ENCODE measurements at regions of chr1 and their contacts with region 1.

Region 1: GRCh38 chr1:115469703-115470476 is 131.8 kb upstream of the NGF start:
- DNase-seq: peak in 4 of 6 donors; percentile 59 to 81 (median 71)
- ATAC-seq: peak; percentile 55 to 98 (median 91)
- H3K4me3 ChIP-seq: no peak overlapping the region
- H3K27ac ChIP-seq: no peak overlapping the region
- H3K4me1 ChIP-seq: no peaks in the 10 kb centered on the region
- H3K27me3 ChIP-seq: no peaks in the 10 kb centered on the region
- CTCF ChIP-seq: peak; percentile 63 to 90 (median 86)

Region 2: DNA sequence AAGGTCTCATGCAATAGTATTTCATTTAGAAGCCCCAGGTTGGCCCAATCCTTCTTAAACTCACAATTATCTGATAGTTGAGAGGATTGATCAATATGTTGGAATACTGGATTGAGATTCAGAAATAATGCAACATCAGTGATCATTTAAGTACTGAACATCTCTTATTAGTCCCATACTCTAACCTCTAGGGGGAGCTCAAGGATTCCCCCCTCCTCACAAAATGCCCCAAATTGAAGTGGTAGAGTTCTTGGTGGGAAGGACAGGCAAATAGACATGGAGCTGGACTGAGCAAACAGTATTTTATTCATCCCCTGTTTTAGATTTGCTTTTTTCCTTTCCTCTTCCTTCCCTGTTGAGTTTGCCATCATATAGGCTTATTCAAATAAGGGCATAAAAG is 194.7 kb before region 1 on chr1:
- intact Hi-C with region 1: loop called in 1 of 3 experiments (anchors 10 kb)
- DNase-seq: no peak
- ATAC-seq: no peak
- H3K4me3 ChIP-seq: no peak overlapping the region
- H3K27ac ChIP-seq: no peak overlapping the region
- H3K4me1 ChIP-seq: no peaks in the 10 kb centered on the region
- H3K27me3 ChIP-seq: no peaks in the 10 kb centered on the region
- CTCF ChIP-seq: peak in 1 of 4 donors; percentile 9

Region 3: DNA sequence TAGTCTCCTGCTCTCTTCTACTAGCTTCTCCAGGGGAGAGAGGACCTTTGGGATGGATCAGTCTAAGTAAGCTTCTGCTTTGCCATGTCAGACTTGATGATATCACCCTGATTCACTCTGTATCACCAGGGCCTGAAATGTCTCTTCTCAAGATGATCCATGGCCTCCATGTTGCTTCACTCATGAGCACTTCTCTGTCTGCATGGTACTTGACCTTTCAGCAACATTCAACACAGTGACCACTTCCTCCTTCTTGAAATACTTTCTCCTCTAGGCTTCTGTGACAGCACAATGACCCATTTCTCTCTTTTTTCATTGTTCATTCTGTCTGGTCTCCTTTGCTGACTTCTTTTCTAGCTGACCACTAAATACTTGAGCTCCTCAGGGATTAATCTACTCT is 96.6 kb before region 1 on chr1:
- intact Hi-C with region 1: no loop called
- DNase-seq: no peak
- ATAC-seq: no peak
- H3K4me3 ChIP-seq: no peak overlapping the region
- H3K27ac ChIP-seq: no peak overlapping the region
- H3K4me1 ChIP-seq: no peaks in the 10 kb centered on the region
- H3K27me3 ChIP-seq: no peaks in the 10 kb centered on the region
- CTCF ChIP-seq: no peak

Region 4: DNA sequence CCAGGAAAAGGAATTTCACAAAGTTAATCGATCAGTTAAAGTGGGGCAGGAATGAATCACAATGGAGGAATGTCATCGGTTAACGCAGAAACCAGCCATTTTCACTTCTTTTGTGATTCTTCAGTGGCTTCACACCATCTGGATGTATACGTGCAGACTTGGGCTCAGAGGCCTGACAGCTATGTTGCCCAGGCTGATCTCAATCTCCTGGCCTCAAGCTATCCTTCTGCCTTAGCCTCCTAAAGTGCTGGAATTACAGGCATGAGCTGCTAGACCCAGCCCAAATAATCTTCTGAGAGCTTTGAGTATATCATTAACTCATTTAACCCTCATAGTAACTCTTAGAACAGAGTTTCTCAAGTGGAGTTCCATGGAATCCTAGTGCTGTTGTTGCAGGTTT is 45.4 kb after region 1 on chr1:
- intact Hi-C with region 1: no loop called
- DNase-seq: no peak
- ATAC-seq: no peak
- H3K4me3 ChIP-seq: no peak overlapping the region
- H3K27ac ChIP-seq: no peak overlapping the region
- H3K4me1 ChIP-seq: no peaks in the 10 kb centered on the region
- H3K27me3 ChIP-seq: no peaks in the 10 kb centered on the region
- CTCF ChIP-seq: no peak

Region 5: GRCh38 chr1:115829023-115829693 is 359.3 kb after region 1 on chr1:
- intact Hi-C with region 1: no loop called
- DNase-seq: no peak
- ATAC-seq: peak in 2 of 4 donors; percentile 46 to 67
- H3K4me3 ChIP-seq: peak overlapping the region in 2 of 4 donors; percentile 49 to 66
- H3K27ac ChIP-seq: no peak overlapping the region
- H3K4me1 ChIP-seq: no peaks in the 10 kb centered on the region
- H3K27me3 ChIP-seq: no peaks in the 10 kb centered on the region
- CTCF ChIP-seq: no peak